Ovary (tissue), 10 donors: ENCODE measurements at regions of chr9 and their contacts with region 1.

Region 1: DNA sequence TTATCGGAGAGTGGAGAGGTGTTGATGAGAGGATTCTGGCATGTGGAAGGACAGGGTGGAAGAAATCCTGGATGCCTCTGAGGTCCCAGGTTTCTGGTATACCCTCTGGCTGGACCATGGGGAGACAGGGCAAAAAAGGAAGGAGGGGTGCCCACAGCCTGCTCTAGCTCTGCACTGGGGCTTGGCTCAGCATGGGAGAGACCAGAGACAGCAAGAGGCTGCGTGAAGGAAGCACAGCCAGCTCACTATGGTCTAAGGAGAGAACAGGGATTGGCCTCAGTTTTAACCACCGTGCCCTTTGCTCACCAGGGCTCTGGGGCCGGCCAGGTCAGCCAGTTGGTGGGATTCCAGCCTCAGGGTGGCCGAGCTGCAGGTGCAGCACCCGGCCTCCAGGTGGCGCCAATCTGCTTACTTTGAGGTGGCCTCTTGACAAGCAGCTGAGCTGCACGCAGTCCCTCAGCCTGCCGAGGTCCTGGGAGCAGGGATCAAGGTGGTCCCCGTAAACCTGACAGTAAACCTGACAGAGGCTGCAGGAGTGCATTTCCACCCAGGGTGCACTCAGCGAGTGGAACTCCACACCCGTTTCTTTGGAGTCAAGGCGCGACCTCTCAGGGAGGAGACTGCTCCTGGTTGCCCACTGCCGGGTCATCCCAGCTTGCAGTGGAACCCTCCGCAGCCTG is 25.0 kb upstream of the SPTLC1 start:
- DNase-seq: peak; percentile 75 to 88 (median 84)
- H3K4me3 ChIP-seq: peak overlapping the region; percentile 44
- H3K27ac ChIP-seq: no peak overlapping the region
- H3K4me1 ChIP-seq: peaks cover 9% of the 10 kb centered on the region
- H3K27me3 ChIP-seq: no peaks in the 10 kb centered on the region
- CTCF ChIP-seq: peak; percentile 83 to 89 (median 83)
- EP300 ChIP-seq: no peak
- POLR2A ChIP-seq: no peak

Region 2: DNA sequence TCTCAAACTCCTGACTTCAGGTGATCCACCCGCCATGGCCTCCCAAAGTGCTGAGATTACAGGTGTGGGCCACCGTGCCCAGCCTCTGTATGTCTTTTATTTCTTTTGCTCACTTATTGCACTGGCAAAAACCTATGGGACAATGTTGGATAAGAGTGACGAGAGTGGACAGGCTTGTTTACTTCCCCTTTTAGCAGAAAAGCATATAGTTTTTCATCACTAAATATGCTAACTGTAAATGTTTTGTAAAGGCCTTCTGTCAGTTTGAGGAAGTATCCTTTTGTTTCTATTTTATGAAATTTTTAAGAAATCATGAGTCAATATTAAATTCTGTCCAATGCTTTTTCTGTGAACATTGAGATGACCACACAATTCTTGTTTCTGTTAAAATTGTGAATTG is 881.8 kb before region 1 on chr9:
- intact Hi-C with region 1: no loop called
- DNase-seq: no peak
- H3K4me3 ChIP-seq: no peak overlapping the region
- H3K27ac ChIP-seq: no peak overlapping the region
- H3K4me1 ChIP-seq: no peaks in the 10 kb centered on the region
- H3K27me3 ChIP-seq: no peaks in the 10 kb centered on the region
- CTCF ChIP-seq: no peak
- EP300 ChIP-seq: no peak
- POLR2A ChIP-seq: no peak

Region 3: DNA sequence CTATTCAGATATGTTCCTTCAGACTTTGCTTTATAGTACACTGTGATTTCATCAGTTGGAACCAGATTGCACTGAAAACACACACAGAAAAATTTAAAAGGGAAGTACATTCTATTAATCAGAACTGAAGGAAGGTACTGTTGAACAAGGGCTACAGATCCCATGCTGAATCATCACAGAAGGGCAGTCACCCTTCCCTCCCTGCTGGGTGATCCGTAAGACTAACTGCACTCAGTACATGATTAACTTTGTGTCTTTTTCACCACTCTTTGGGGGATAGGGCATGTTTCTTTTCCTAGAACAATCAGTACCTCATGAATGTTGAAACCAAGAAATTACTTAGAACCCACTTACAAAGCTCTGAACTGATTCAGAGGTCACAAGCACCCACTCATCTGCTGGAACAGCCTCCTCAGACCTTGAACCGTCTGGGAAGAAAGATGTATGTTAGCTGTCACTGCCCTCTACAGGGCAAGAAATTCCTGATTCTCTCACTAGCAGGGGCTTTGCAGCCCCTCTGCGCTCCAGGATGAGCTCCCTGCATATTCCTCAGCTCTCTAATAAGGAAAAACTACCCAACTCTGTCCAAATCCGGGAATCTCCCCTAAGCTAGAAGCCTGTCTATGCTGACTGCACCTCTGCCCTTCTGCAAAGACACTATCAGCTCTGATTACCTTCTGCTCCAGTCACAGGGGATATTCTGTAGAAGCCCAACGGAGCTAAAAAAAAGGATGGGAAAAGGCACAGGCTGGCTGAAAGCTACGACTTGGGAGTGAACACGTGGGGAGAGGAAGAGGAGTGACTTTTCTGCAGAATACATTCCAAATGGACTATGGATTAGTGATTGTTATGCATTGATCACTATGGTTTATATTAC is 102.3 kb after region 1 on chr9:
- intact Hi-C with region 1: loop called (anchors 1 to 10 kb)
- DNase-seq: peak in 2 of 5 donors; percentile 26 to 39
- H3K4me3 ChIP-seq: no peak overlapping the region
- H3K27ac ChIP-seq: no peak overlapping the region
- H3K4me1 ChIP-seq: no peaks in the 10 kb centered on the region
- H3K27me3 ChIP-seq: no peaks in the 10 kb centered on the region
- CTCF ChIP-seq: peak in 2 of 3 donors; percentile 40 to 63
- EP300 ChIP-seq: no peak
- POLR2A ChIP-seq: no peak

Region 4: GRCh38 chr9:92293452-92294296 is 153.5 kb after region 1 on chr9 and contains the start of gene IARS1:
- intact Hi-C with region 1: loop called in 1 of 4 experiments (anchors 10 kb)
- DNase-seq: peak; percentile 97 to 100 (median 99)
- H3K4me3 ChIP-seq: peak within 1 kb of the TSS; percentile 78
- H3K27ac ChIP-seq: peak within 1 kb of the TSS in 1 of 2 donors; percentile 57
- H3K4me1 ChIP-seq: peaks cover 5% of the 10 kb centered on the region
- H3K27me3 ChIP-seq: no peaks in the 10 kb centered on the region
- CTCF ChIP-seq: peak in 1 of 3 donors; percentile 35
- EP300 ChIP-seq: no peak
- POLR2A ChIP-seq: peak; percentile 64
- total RNA-seq, gene IARS1: 44.4 to 281 (median 64.8) TPM

Region 5: DNA sequence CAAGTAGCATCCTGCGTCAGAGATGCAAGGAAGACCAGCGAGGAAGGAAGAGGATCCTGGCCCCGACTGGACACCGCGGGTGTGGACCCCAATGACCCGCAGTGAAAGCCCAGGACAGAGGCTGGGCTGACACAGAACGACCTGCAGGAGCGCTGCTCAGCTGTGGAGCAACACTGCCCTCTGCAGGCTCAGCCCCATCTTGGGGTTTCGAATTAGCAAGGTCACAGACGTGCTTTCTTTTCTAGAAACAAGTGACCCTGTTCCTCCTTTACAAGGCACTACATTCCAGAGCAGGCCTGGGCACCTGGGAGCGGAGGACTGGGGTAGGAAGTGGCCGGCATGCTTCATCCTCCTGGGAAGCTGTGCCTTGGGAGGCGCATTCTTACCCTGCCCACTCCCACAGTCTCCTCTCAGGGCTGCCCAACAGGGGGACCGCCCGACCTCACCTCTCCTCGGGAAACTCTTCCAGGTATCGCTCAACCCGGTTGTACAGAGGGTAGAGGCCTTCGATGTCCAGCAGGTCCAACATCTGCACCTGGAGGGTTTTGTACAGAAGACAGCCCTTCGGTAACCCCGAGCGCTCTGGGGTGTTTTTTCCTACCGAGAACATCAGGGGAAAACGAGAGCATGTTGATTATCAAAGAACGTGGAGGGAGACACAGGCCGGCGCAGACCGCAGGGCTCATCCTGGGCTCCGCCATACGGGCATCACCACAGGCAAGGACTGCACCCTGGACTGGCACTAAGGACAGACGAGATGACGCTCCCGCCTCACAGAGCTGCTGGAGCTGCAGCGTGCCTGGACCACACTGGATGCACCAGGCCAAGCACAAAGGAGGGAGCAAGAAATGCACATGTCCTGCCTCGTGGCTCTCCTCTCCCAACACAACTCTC is 494.7 kb after region 1 on chr9:
- intact Hi-C with region 1: loop called in 3 of 4 experiments (anchors 5 to 10 kb)
- DNase-seq: peak; percentile 84 to 93 (median 92)
- H3K4me3 ChIP-seq: no peak overlapping the region
- H3K27ac ChIP-seq: peak overlapping the region; percentile 16 to 33
- H3K4me1 ChIP-seq: peaks cover 5% of the 10 kb centered on the region
- H3K27me3 ChIP-seq: no peaks in the 10 kb centered on the region
- CTCF ChIP-seq: peak; percentile 95 to 98 (median 98)
- EP300 ChIP-seq: no peak
- POLR2A ChIP-seq: peak; percentile 21

Region 6: GRCh38 chr9:92650839-92651621 is 510.8 kb after region 1 on chr9:
- intact Hi-C with region 1: loop called in 1 of 4 experiments (anchors 5 kb)
- DNase-seq: peak; percentile 68 to 83 (median 76)
- H3K4me3 ChIP-seq: no peak overlapping the region
- H3K27ac ChIP-seq: peak overlapping the region in 1 of 2 donors; percentile 63
- H3K4me1 ChIP-seq: peaks cover 11% of the 10 kb centered on the region
- H3K27me3 ChIP-seq: no peaks in the 10 kb centered on the region
- CTCF ChIP-seq: no peak
- EP300 ChIP-seq: no peak
- POLR2A ChIP-seq: no peak

Region 7: DNA sequence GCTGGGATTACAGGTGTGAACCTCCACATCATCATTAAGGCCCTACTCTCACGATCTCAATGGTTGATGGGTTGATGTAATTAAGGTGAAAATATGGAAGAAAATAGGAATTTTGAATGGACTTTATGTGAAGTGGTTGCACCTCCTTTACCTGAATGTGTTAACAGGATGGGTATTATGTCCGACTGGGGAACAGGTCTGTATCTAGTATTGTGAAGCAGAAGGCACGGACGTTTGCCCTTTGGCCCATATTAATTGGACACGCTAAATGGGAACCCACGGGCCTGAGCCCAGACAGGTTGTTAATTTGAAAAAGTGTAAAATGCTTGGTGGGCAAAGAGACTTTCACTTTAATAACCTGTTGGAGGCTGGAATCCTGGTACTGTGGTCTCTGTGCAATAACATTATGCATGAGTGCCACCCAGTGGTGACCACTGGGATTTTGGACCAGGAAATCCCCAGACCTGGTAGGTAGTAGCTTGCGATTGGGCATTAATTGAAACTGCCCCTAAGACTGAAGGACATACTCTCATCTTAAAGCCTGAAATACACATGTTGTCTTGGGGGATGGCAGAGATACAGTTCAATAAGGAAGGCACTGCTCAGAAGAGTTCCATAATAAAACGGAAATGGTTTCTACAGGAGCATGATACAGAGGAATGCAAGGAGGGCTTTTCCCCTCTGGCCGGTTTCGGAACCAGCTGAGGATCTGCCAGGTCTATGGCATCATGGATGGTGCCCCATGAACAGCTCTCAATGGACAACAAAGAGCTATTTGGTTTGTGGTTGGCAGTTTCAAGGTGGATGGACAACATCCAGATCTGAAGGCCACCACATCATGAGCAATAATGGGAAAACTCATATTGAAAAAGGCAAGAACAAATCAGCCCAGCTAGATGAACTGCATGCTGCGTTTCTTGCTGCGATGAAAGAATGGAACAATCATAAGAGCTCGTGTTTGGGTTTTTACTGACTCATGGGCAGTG is 650.6 kb after region 1 on chr9:
- intact Hi-C with region 1: loop called in 3 of 4 experiments (anchors 5 to 10 kb)
- DNase-seq: peak; percentile 69 to 86 (median 81)
- H3K4me3 ChIP-seq: no peak overlapping the region
- H3K27ac ChIP-seq: no peak overlapping the region
- H3K4me1 ChIP-seq: no peaks in the 10 kb centered on the region
- H3K27me3 ChIP-seq: no peaks in the 10 kb centered on the region
- CTCF ChIP-seq: peak; percentile 37 to 88 (median 80)
- EP300 ChIP-seq: no peak
- POLR2A ChIP-seq: no peak